ENCODE measurements at regions of chr13 and their contacts with region 1.

Region 1: GRCh38 chr13:48580185-48580803 is 47.4 kb upstream of the RCBTB2 start:
- DNase-seq: peak; percentile 9 to 86 (median 63)
- ATAC-seq: peak in 3 of 4 experiments; percentile 56 to 70 (median 62)
- H3K4me3 ChIP-seq: no peak overlapping the region
- H3K4me3 Mint-ChIP-seq: no peak overlapping the region
- H3K27ac ChIP-seq: no peak overlapping the region
- H3K27ac Mint-ChIP-seq: no peak overlapping the region
- H3K4me1 ChIP-seq: peaks cover 0 to 5% of the 10 kb centered on the region in 2 experiments
- H3K4me1 Mint-ChIP-seq: peaks cover 7 to 24% (median 7%) of the 10 kb centered on the region in 3 donors
- H3K27me3 ChIP-seq: peaks cover 0 to 4% of the 10 kb centered on the region in 2 experiments
- H3K27me3 Mint-ChIP-seq: peaks cover 0 to 11% of the 10 kb centered on the region in 2 donors

Region 2: GRCh38 chr13:48126944-48127830 is 453.1 kb before region 1 on chr13:
- CTCF ChIA-PET with region 1: interaction called, 3 to 15 read pairs
- POLR2A ChIA-PET with region 1: no interaction called
- DNase-seq: peak in 34 of 35 experiments; percentile 2 to 82 (median 31)
- ATAC-seq: peak; percentile 81 to 94 (median 92)
- H3K4me3 ChIP-seq: no peak overlapping the region
- H3K4me3 Mint-ChIP-seq: peak overlapping the region; percentile 25 to 39 (median 35)
- H3K27ac ChIP-seq: peak overlapping the region; percentile 68
- H3K27ac Mint-ChIP-seq: peak overlapping the region; percentile 87 to 91
- H3K4me1 ChIP-seq: peaks cover 8 to 13% of the 10 kb centered on the region in 2 experiments
- H3K4me1 Mint-ChIP-seq: peaks cover 23 to 32% (median 32%) of the 10 kb centered on the region in 3 donors
- H3K27me3 ChIP-seq: no peaks in the 10 kb centered on the region
- H3K27me3 Mint-ChIP-seq: peaks cover 0 to under 1% of the 10 kb centered on the region in 2 donors

Region 3: DNA sequence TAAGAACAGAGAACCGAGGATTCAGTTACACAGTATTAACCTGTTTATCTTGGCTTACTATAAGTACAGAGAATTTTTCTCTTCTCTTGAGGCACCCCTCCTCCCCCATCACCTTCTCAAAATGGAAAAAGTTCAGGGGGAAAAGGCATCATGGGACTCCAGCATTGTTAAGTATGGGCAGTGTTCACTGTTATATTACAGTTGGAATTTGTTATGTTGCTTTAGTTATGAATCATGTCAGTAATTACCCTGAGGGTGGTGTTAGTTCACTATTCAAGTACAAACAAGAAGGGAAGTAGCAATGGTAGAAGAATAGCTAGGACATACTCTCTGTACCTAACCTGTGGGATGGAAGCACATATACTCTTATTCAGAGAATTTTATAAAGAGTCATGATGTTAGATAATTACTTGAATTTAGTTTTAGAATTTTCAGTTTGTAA is 179.4 kb before region 1 on chr13:
- CTCF ChIA-PET with region 1: interaction called, 15 to 29 read pairs
- POLR2A ChIA-PET with region 1: interaction called in 1 of 2 experiments, 4 read pairs
- DNase-seq: peak in 1 of 35 experiments; percentile 47
- ATAC-seq: peak; percentile 64 to 76 (median 73)
- H3K4me3 ChIP-seq: no peak overlapping the region
- H3K4me3 Mint-ChIP-seq: peak overlapping the region; percentile 34 to 49 (median 40)
- H3K27ac ChIP-seq: peak overlapping the region; percentile 76
- H3K27ac Mint-ChIP-seq: peak overlapping the region; percentile 70 to 89
- H3K4me1 ChIP-seq: peaks cover 20 to 23% of the 10 kb centered on the region in 2 experiments
- H3K4me1 Mint-ChIP-seq: peaks cover 56 to 77% (median 62%) of the 10 kb centered on the region in 3 donors
- H3K27me3 ChIP-seq: no peaks in the 10 kb centered on the region
- H3K27me3 Mint-ChIP-seq: no peaks in the 10 kb centered on the region

Region 4: GRCh38 chr13:48532506-48533499 is 47.5 kb before region 1 on chr13 and contains the start of gene RCBTB2:
- CTCF ChIA-PET with region 1: interaction called, 4 to 10 read pairs
- POLR2A ChIA-PET with region 1: interaction called in 1 of 2 experiments, 3 read pairs
- DNase-seq: peak; percentile 95 to 100 (median 98)
- ATAC-seq: peak; percentile 88 to 95 (median 92)
- H3K4me3 ChIP-seq: peak within 1 kb of the TSS; percentile 87 to 96
- H3K4me3 Mint-ChIP-seq: peak within 1 kb of the TSS; percentile 90 to 93 (median 92)
- H3K27ac ChIP-seq: peak within 1 kb of the TSS; percentile 97
- H3K27ac Mint-ChIP-seq: peak within 1 kb of the TSS; percentile 99
- H3K4me1 ChIP-seq: peaks cover 13 to 21% of the 10 kb centered on the region in 2 experiments
- H3K4me1 Mint-ChIP-seq: peaks cover 24 to 39% (median 26%) of the 10 kb centered on the region in 3 donors
- H3K27me3 ChIP-seq: no peaks in the 10 kb centered on the region
- H3K27me3 Mint-ChIP-seq: no peaks in the 10 kb centered on the region
- total RNA-seq, gene RCBTB2: 10.4 to 19.7 (median 16.2) TPM

Region 5: DNA sequence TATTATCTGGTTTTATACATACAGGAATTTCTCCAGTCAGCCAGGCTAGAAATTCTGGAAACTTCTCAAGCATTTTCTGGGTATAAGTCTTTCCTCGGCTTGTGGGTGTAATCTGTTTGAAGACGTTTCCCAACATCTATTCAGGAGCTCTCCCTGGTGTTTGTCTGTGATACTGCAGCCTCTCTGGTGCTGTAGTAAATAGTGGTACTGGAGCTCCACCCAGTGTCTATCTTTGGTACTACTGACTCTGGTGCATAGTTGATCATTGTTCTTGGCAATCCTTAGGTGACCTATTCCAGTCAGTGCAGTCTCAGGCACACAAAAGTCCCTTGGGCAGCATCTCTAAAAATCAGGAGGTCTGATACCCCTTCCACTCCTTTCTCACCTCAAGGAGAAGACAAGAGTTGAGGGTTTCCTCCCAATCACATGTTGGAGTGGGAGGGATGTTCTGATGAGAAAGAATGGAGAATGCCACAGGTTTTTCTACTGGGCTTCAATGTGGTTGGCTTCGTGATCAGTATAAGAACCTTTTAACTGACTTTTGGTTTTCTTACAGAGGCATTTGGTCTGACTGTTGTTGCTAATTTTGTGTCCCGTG is 188.9 kb after region 1 on chr13:
- CTCF ChIA-PET with region 1: interaction called, 7 to 19 read pairs
- POLR2A ChIA-PET with region 1: no interaction called
- DNase-seq: peak; percentile 28 to 91 (median 73)
- ATAC-seq: peak; percentile 96 to 100 (median 99)
- H3K4me3 ChIP-seq: no peak overlapping the region
- H3K4me3 Mint-ChIP-seq: no peak overlapping the region
- H3K27ac ChIP-seq: no peak overlapping the region
- H3K27ac Mint-ChIP-seq: no peak overlapping the region
- H3K4me1 ChIP-seq: no peaks in the 10 kb centered on the region
- H3K4me1 Mint-ChIP-seq: peaks cover 4 to 6% (median 5%) of the 10 kb centered on the region in 3 donors
- H3K27me3 ChIP-seq: no peaks in the 10 kb centered on the region
- H3K27me3 Mint-ChIP-seq: peaks cover 4 to 6% of the 10 kb centered on the region in 2 donors